CD8-positive, alpha-beta memory T cell (primary cell): ENCODE measurements at regions of chr12 and their contacts with region 1.

Region 1: DNA sequence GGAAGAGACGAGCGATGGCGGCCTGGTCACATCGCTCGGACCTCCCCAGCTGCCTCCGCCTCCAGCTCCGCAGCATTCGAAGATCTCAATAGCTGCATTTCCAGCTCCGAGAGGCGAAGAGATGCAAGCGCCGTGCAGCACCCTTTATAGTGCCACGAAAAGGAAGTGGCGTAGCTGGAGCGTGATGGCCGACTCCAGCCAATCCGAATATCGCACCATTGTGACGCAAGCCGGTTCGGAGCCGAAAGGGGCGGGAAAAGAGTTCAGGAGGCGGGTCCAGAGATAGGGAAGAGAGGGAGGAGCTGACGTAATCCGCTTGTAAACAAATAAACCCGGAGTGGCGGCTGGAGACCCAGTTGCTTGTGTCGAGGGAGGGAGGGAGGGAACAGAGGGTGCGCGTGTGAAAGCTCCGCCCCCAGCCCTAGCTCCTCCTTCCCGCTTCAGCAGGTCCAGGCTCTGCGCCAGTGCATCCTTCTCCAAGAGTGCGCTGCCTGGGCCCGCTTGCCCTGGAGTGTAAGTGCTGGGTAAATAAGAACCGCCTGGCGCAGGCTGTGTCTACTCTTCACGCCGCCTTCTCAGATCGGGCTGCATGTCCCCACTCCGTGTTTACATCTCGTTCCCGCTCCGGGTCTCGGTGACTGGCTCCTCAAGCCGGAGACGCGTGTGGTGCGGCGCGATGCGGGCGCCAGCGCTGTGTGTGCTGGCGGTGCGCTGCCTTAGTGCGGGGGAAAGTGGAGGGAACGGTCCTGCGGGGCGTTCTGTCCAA is at the start of gene BTG1:
- DNase-seq: peak; percentile 94 to 100 (median 99)
- H3K4me3 ChIP-seq: peak within 1 kb of the TSS; percentile 98
- H3K4me3 Mint-ChIP-seq: peak within 1 kb of the TSS; percentile 95 to 100 (median 100)
- H3K27ac ChIP-seq: peak within 1 kb of the TSS; percentile 98
- H3K27ac Mint-ChIP-seq: peak within 1 kb of the TSS; percentile 95 to 100 (median 99)
- H3K4me1 ChIP-seq: peaks cover 16% of the 10 kb centered on the region
- H3K4me1 Mint-ChIP-seq: peaks cover 22 to 27% (median 25%) of the 10 kb centered on the region in 3 donors
- H3K27me3 ChIP-seq: no peaks in the 10 kb centered on the region
- H3K27me3 Mint-ChIP-seq: peaks cover 0 to 14% of the 10 kb centered on the region in 2 donors
- total RNA-seq, gene BTG1: 98.3 to 103 TPM

Region 2: DNA sequence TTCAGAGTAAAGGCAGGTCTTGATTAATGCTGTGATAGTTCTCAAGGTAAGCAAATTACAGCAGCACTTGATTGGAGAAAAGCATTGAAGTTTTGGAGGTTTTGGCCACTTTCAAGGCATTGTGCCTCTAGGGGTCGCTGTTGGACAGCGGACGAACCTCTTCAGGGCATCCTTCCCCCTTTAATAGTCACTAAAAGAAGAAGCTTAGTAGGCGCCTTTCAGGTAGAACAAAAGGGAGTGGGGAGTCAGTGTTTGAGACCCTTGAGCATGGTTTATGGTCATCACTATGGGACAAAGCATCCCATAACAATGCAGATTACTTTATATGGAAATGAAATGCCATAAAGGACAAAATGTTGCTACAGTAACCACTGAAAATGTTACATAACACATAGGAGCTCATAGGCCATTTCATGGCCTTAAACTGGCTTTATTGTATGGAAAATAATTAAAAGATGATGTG is 763.8 kb before region 1 on chr12:
- CTCF ChIA-PET with region 1: interaction called, 22 read pairs
- POLR2A ChIA-PET with region 1: interaction called, 3 read pairs
- DNase-seq: peak; percentile 61 to 86 (median 78)
- H3K4me3 ChIP-seq: no peak overlapping the region
- H3K4me3 Mint-ChIP-seq: peak overlapping the region in 6 of 7 donors; percentile 50 to 79 (median 72)
- H3K27ac ChIP-seq: no peak overlapping the region
- H3K27ac Mint-ChIP-seq: peak overlapping the region in 5 of 8 donors; percentile 15 to 77 (median 49)
- H3K4me1 ChIP-seq: peaks cover 4% of the 10 kb centered on the region
- H3K4me1 Mint-ChIP-seq: peaks cover 4 to 9% (median 6%) of the 10 kb centered on the region in 3 donors
- H3K27me3 ChIP-seq: no peaks in the 10 kb centered on the region
- H3K27me3 Mint-ChIP-seq: peaks cover 5 to 37% of the 10 kb centered on the region in 2 donors

Region 3: DNA sequence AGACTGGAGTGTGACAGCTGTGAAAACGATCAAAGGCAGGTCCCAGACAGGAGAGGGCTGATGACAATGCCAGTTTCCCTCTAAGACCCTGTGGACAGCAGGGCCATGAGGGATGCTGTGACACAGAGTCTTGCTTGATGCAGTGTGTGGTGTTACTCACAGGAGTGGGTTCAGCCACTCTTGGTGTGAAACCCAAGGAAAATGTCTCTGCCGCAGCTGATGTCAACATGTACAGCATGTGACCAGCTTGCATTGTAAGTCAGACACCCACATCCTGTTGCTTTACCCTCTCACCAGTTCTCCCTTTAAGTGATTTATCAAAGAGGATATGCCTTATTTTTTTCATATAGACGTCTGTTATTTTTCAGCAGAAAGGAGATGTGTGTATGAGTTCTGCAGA is 268.9 kb before region 1 on chr12:
- CTCF ChIA-PET with region 1: interaction called, 11 read pairs
- POLR2A ChIA-PET with region 1: interaction called, 49 read pairs
- DNase-seq: peak; percentile 73 to 96 (median 93)
- H3K4me3 ChIP-seq: peak overlapping the region; percentile 42
- H3K4me3 Mint-ChIP-seq: peak overlapping the region; percentile 55 to 84 (median 75)
- H3K27ac ChIP-seq: peak overlapping the region; percentile 79
- H3K27ac Mint-ChIP-seq: peak overlapping the region; percentile 95 to 100 (median 100)
- H3K4me1 ChIP-seq: peaks cover 70% of the 10 kb centered on the region
- H3K4me1 Mint-ChIP-seq: peaks cover 78 to 85% (median 84%) of the 10 kb centered on the region in 3 donors
- H3K27me3 ChIP-seq: no peaks in the 10 kb centered on the region
- H3K27me3 Mint-ChIP-seq: no peaks in the 10 kb centered on the region

Region 4: GRCh38 chr12:92041742-92042141 is 104.2 kb before region 1 on chr12:
- CTCF ChIA-PET with region 1: interaction called, 6 read pairs
- POLR2A ChIA-PET with region 1: interaction called, 14 read pairs
- DNase-seq: peak in 3 of 5 donors; percentile 23 to 54 (median 47)
- H3K4me3 ChIP-seq: no peak overlapping the region
- H3K4me3 Mint-ChIP-seq: peak overlapping the region in 5 of 7 donors; percentile 34 to 44 (median 35)
- H3K27ac ChIP-seq: no peak overlapping the region
- H3K27ac Mint-ChIP-seq: peak overlapping the region in 6 of 8 donors; percentile 1 to 74 (median 56)
- H3K4me1 ChIP-seq: peaks cover 49% of the 10 kb centered on the region
- H3K4me1 Mint-ChIP-seq: peaks cover 44 to 88% (median 65%) of the 10 kb centered on the region in 3 donors
- H3K27me3 ChIP-seq: no peaks in the 10 kb centered on the region
- H3K27me3 Mint-ChIP-seq: no peaks in the 10 kb centered on the region

Region 5: DNA sequence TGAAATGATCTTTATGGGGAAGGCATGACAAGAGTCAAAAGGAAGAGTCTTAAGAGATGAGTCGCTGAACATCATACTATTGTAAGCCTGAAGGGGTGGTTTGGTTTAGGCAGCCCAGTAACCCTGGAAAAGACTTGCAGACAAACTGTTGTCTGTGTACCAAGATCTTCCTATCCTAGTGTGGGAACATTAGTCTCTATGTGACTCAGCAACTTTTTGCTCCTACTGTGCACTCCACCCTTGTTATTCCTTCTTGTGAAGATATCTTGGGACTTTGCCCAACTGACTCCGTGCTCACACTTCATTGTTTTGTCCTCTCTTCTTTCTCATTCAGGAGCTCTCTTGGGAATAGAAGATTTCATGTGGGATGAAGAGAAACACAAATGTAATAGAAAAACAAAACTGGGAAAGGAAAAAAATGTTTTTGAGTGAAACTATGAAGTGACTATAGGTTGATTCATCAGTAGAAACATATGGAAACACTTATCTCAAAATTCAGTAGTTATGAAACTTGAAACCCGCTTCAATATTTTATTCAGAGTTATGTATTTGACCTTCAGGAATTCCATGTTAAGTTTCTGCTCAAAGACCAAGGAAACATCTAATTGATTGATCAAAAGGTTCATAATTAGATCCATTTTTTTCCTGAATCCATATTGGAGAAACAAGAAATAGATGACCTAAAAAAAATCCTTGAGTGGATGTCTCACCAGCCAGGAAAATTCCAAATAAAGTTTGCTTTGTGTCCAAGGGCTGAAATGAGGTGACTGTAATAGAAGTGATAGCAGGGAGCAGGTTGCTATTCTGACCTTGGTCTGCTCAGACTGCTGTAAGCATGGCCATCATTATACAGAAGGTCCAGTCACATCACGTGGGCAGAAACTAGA is 67.5 kb before region 1 on chr12:
- CTCF ChIA-PET with region 1: no interaction called
- POLR2A ChIA-PET with region 1: no interaction called
- DNase-seq: no peak
- H3K4me3 ChIP-seq: no peak overlapping the region
- H3K4me3 Mint-ChIP-seq: no peak overlapping the region
- H3K27ac ChIP-seq: no peak overlapping the region
- H3K27ac Mint-ChIP-seq: peak overlapping the region in 1 of 8 donors; percentile 19
- H3K4me1 ChIP-seq: peaks cover 56% of the 10 kb centered on the region
- H3K4me1 Mint-ChIP-seq: peaks cover 26 to 72% (median 68%) of the 10 kb centered on the region in 3 donors
- H3K27me3 ChIP-seq: no peaks in the 10 kb centered on the region
- H3K27me3 Mint-ChIP-seq: no peaks in the 10 kb centered on the region

Region 6: GRCh38 chr12:92289629-92290349 is 143.9 kb after region 1 on chr12:
- CTCF ChIA-PET with region 1: no interaction called
- POLR2A ChIA-PET with region 1: no interaction called
- DNase-seq: no peak
- H3K4me3 ChIP-seq: no peak overlapping the region
- H3K4me3 Mint-ChIP-seq: no peak overlapping the region
- H3K27ac ChIP-seq: no peak overlapping the region
- H3K27ac Mint-ChIP-seq: no peak overlapping the region
- H3K4me1 ChIP-seq: no peaks in the 10 kb centered on the region
- H3K4me1 Mint-ChIP-seq: peaks cover 0 to 9% (median 0%) of the 10 kb centered on the region in 3 donors
- H3K27me3 ChIP-seq: no peaks in the 10 kb centered on the region
- H3K27me3 Mint-ChIP-seq: no peaks in the 10 kb centered on the region

Region 7: DNA sequence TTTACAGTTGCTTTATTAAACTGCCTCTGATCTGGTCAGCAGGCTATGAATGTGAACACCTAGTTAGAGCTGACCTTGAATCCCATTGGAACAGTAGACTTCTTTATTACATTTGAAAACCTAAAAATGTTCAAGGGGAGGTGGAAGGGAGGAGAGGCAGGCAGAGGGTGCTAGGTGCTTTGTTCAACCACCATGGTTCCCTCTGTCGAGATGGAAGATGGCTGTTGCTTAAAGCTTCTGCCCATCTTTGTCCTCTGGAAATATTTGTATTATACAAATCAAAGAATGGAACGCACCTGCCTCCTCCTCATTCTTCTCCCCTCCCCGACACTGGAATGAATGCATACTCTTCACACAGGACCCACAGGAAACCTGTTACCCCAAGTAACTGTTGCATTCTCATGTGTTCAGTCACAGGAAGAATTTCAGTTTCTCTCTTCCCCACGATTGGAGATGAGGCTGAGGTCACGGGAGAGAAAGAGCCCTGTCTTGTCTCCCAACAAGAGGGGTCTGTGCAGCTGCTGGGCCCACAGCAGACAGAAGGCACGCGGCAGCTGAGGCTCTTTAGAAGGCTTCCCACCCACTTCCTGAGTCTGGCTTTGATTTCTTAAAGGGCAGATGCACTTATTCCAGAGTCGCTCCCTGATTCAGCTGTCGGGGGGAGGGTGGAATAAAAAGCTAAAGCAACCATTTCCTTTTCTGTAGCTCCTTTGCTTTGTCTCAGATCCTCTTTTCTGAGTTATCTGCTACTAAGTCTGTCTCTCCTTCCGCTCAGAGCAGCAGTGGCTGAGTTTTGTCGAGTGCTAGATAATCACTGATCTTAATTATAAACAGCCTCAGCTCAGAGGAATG is 217.6 kb after region 1 on chr12:
- CTCF ChIA-PET with region 1: interaction called, 5 read pairs
- POLR2A ChIA-PET with region 1: interaction called, 24 read pairs
- DNase-seq: peak; percentile 9 to 75 (median 39)
- H3K4me3 ChIP-seq: peak overlapping the region; percentile 35
- H3K4me3 Mint-ChIP-seq: peak overlapping the region; percentile 43 to 89 (median 76)
- H3K27ac ChIP-seq: peak overlapping the region; percentile 15
- H3K27ac Mint-ChIP-seq: peak overlapping the region; percentile 87 to 96 (median 94)
- H3K4me1 ChIP-seq: peaks cover 65% of the 10 kb centered on the region
- H3K4me1 Mint-ChIP-seq: peaks cover 55 to 69% (median 64%) of the 10 kb centered on the region in 3 donors
- H3K27me3 ChIP-seq: no peaks in the 10 kb centered on the region
- H3K27me3 Mint-ChIP-seq: no peaks in the 10 kb centered on the region

Region 8: DNA sequence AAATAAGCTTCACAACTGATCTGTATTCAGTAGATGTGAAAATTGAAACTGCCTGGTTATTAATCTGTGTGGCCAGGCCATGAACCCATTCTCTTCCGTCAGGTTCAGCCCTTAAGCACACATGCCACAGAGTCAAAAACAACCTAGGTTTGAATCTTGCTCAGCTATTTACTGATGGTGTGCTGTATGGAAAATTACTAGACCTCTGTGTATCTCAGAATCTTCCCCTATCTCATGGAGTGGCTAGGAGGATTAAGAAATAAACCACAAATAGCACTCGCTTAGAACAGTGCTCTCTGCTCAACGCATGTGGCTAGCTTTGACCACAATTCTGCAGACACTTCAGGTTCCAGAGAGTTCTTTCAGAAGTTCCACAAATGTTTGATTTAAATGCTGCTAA is 316.1 kb after region 1 on chr12:
- CTCF ChIA-PET with region 1: no interaction called
- POLR2A ChIA-PET with region 1: interaction called, 10 read pairs
- DNase-seq: peak in 1 of 5 donors; percentile 18
- H3K4me3 ChIP-seq: no peak overlapping the region
- H3K4me3 Mint-ChIP-seq: peak overlapping the region in 6 of 7 donors; percentile 6 to 70 (median 34)
- H3K27ac ChIP-seq: peak overlapping the region; percentile 5
- H3K27ac Mint-ChIP-seq: peak overlapping the region; percentile 57 to 90 (median 84)
- H3K4me1 ChIP-seq: peaks cover 26% of the 10 kb centered on the region
- H3K4me1 Mint-ChIP-seq: peaks cover 39 to 63% (median 44%) of the 10 kb centered on the region in 3 donors
- H3K27me3 ChIP-seq: no peaks in the 10 kb centered on the region
- H3K27me3 Mint-ChIP-seq: no peaks in the 10 kb centered on the region

Region 9: GRCh38 chr12:92593734-92594402 is 448.0 kb after region 1 on chr12:
- CTCF ChIA-PET with region 1: interaction called, 3 read pairs
- POLR2A ChIA-PET with region 1: interaction called, 30 read pairs
- DNase-seq: peak; percentile 69 to 95 (median 90)
- H3K4me3 ChIP-seq: peak overlapping the region; percentile 12
- H3K4me3 Mint-ChIP-seq: peak overlapping the region; percentile 1 to 84 (median 39)
- H3K27ac ChIP-seq: peak overlapping the region; percentile 83
- H3K27ac Mint-ChIP-seq: peak overlapping the region; percentile 97 to 100 (median 100)
- H3K4me1 ChIP-seq: peaks cover 33% of the 10 kb centered on the region
- H3K4me1 Mint-ChIP-seq: peaks cover 31 to 62% (median 57%) of the 10 kb centered on the region in 3 donors
- H3K27me3 ChIP-seq: no peaks in the 10 kb centered on the region
- H3K27me3 Mint-ChIP-seq: no peaks in the 10 kb centered on the region